ENCODE measurements at regions of chr10 and their contacts with region 1.

Region 1: GRCh38 chr10:6401562-6402348 is 178.3 kb downstream of the PRKCQ start:
- DNase-seq: peak; percentile 89
- H3K4me3 ChIP-seq: peak overlapping the region; percentile 40
- H3K4me3 Mint-ChIP-seq: peak overlapping the region; percentile 85
- H3K27ac Mint-ChIP-seq: peak overlapping the region; percentile 87
- H3K4me1 ChIP-seq: 0 out of 2 replicates have a peak, but pooled peaks cover 4% of the 10 kb centered on the region
- H3K4me1 Mint-ChIP-seq: peaks cover 9% of the 10 kb centered on the region
- H3K27me3 ChIP-seq: 0 out of 2 replicates have a peak, but pooled peaks cover 1% of the 10 kb centered on the region
- H3K27me3 Mint-ChIP-seq: peaks cover 17% of the 10 kb centered on the region
- CTCF ChIP-seq: peak; percentile 89 to 90

Region 2: DNA sequence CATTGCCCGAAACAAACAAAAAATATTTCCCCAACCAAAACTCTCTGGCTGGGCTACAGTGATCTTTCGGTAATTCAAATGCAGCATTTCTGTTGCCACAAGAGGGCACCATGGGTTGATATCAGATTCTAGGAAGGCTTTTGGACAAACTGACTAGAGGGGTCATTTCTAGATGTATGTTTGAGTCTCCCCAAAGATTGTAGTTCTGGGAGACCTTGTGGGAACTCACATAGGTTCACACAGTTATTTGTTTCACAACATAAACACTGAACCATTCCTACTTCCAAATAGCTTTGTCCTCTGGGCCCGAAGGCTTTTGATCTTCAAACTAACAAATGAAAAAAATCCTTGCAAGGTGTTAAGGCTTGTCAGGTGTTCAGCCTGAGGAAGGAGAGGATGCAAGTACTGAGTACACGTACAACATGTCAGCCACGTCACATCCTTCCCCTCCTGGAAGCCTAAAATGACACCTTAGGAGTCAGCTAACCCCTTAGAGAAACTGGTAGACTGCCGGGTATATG is 387.5 kb before region 1 on chr10:
- CTCF ChIA-PET with region 1: interaction called, 15 read pairs
- POLR2A ChIA-PET with region 1: no interaction called
- intact Hi-C with region 1: loop called (anchors 1 kb)
- DNase-seq: peak in 1 of 2 experiments; percentile 67
- H3K4me3 ChIP-seq: no peak overlapping the region
- H3K4me3 Mint-ChIP-seq: no peak overlapping the region
- H3K27ac Mint-ChIP-seq: no peak overlapping the region
- H3K4me1 ChIP-seq: no peaks in the 10 kb centered on the region
- H3K4me1 Mint-ChIP-seq: no peaks in the 10 kb centered on the region
- H3K27me3 ChIP-seq: no peaks in the 10 kb centered on the region; the same call in 1 of the 2 replicates
- H3K27me3 Mint-ChIP-seq: peaks cover 9% of the 10 kb centered on the region
- CTCF ChIP-seq: peak; percentile 82 to 85

Region 3: GRCh38 chr10:6108603-6109443 is 292.9 kb before region 1 on chr10:
- CTCF ChIA-PET with region 1: interaction called, 21 read pairs
- POLR2A ChIA-PET with region 1: no interaction called
- intact Hi-C with region 1: loop called (anchors 1 kb)
- DNase-seq: peak in 1 of 2 experiments; percentile 47
- H3K4me3 ChIP-seq: no peak overlapping the region
- H3K4me3 Mint-ChIP-seq: no peak overlapping the region
- H3K27ac Mint-ChIP-seq: no peak overlapping the region
- H3K4me1 ChIP-seq: no peaks in the 10 kb centered on the region
- H3K4me1 Mint-ChIP-seq: no peaks in the 10 kb centered on the region
- H3K27me3 ChIP-seq: no peaks in the 10 kb centered on the region
- H3K27me3 Mint-ChIP-seq: no peaks in the 10 kb centered on the region
- CTCF ChIP-seq: peak; percentile 61 to 85

Region 4: GRCh38 chr10:6144406-6145165 is 257.2 kb before region 1 on chr10:
- CTCF ChIA-PET with region 1: interaction called, 9 read pairs
- POLR2A ChIA-PET with region 1: interaction called, 3 read pairs
- intact Hi-C with region 1: loop called (anchors 1 kb)
- DNase-seq: peak; percentile 88 to 92
- H3K4me3 ChIP-seq: peak overlapping the region; percentile 94
- H3K4me3 Mint-ChIP-seq: peak overlapping the region; percentile 90
- H3K27ac Mint-ChIP-seq: peak overlapping the region; percentile 66
- H3K4me1 ChIP-seq: peaks cover 10% of the 10 kb centered on the region; the same call in 1 of the 2 replicates
- H3K4me1 Mint-ChIP-seq: peaks cover 6% of the 10 kb centered on the region
- H3K27me3 ChIP-seq: no peaks in the 10 kb centered on the region
- H3K27me3 Mint-ChIP-seq: peaks cover 1% of the 10 kb centered on the region
- CTCF ChIP-seq: no peak

Region 5: DNA sequence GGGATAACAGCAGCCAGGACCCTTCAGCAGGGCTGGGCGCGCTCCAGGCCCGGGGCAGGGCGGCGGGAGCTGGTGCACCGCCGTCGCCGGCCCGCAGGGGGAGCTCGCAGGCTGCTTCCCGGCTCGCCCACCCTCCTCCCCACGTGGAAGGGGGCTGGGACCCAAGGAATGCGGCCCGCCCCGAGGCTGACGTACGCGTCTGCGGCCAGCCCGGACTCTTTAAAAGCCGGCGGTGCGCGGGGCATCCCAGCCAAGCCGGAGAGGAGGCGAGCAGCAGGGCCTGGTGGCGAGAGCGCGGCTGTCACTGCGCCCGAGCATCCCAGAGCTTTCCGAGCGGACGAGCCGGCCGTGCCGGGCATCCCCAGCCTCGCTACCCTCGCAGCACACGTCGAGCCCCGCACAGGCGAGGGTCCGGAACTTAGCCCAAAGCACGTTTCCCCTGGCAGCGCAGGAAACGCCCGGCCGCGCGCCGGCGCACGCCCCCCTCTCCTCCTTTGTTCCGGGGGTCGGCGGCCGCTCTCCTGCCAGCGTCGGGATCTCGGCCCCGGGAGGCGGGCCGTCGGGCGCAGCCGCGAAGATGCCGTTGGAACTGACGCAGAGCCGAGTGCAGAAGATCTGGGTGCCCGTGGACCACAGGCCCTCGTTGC is 198.9 kb before region 1 on chr10 and contains the start of gene PFKFB3:
- CTCF ChIA-PET with region 1: interaction called, 327 read pairs
- POLR2A ChIA-PET with region 1: interaction called, 46 read pairs
- intact Hi-C with region 1: loop called (anchors 1 kb)
- DNase-seq: peak; percentile 96 to 99
- H3K4me3 ChIP-seq: peak within 1 kb of the TSS; percentile 78
- H3K4me3 Mint-ChIP-seq: peak within 1 kb of the TSS; percentile 92
- H3K27ac Mint-ChIP-seq: peak within 1 kb of the TSS; percentile 78
- H3K4me1 ChIP-seq: peaks cover 13% of the 10 kb centered on the region
- H3K4me1 Mint-ChIP-seq: peaks cover 8% of the 10 kb centered on the region
- H3K27me3 ChIP-seq: no peaks in the 10 kb centered on the region
- H3K27me3 Mint-ChIP-seq: no peaks in the 10 kb centered on the region
- CTCF ChIP-seq: peak; percentile 88 to 99
- total RNA-seq, gene PFKFB3: 33.0 and 35.4 TPM in 2 replicates

Region 6: DNA sequence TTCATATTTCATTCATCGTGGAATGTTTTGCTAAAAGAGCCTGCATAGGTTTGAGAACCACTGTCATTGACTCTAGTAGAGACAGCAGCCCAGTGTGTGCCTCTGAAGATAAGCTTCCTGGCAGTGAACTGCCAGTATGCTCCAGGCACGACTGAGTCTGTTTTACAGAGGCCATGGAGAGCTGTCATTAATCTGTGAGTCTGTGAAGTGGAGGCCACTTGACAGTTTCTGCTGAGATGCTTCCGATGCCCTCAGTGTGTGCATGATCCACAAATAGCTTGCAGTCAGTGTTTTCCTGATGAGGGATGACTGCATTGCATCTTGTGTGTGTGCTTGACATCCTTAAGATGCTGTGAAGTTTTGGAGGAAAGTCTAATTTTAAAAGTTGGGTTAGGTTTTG is 36.9 kb before region 1 on chr10:
- CTCF ChIA-PET with region 1: interaction called, 12 read pairs
- POLR2A ChIA-PET with region 1: interaction called, 7 read pairs
- intact Hi-C with region 1: no loop called
- DNase-seq: no peak
- H3K4me3 ChIP-seq: no peak overlapping the region
- H3K4me3 Mint-ChIP-seq: no peak overlapping the region
- H3K27ac Mint-ChIP-seq: peak overlapping the region; percentile 87
- H3K4me1 ChIP-seq: peaks cover 36% of the 10 kb centered on the region
- H3K4me1 Mint-ChIP-seq: peaks cover 29% of the 10 kb centered on the region
- H3K27me3 ChIP-seq: no peaks in the 10 kb centered on the region
- H3K27me3 Mint-ChIP-seq: no peaks in the 10 kb centered on the region
- CTCF ChIP-seq: no peak

Region 7: GRCh38 chr10:6416892-6417512 is 15.2 kb after region 1 on chr10:
- CTCF ChIA-PET with region 1: no interaction called
- POLR2A ChIA-PET with region 1: interaction called, 16 read pairs
- intact Hi-C with region 1: no loop called
- DNase-seq: peak in 1 of 2 experiments; percentile 68
- H3K4me3 ChIP-seq: no peak overlapping the region
- H3K4me3 Mint-ChIP-seq: no peak overlapping the region
- H3K27ac Mint-ChIP-seq: no peak overlapping the region
- H3K4me1 ChIP-seq: no peaks in the 10 kb centered on the region
- H3K4me1 Mint-ChIP-seq: no peaks in the 10 kb centered on the region
- H3K27me3 ChIP-seq: peaks cover 5% of the 10 kb centered on the region
- H3K27me3 Mint-ChIP-seq: peaks cover 14% of the 10 kb centered on the region
- CTCF ChIP-seq: peak in 1 of 2 experiments; percentile 81

Region 8: GRCh38 chr10:6478722-6479121 is 77.0 kb after region 1 on chr10:
- CTCF ChIA-PET with region 1: no interaction called
- POLR2A ChIA-PET with region 1: no interaction called
- intact Hi-C with region 1: no loop called
- DNase-seq: no peak
- H3K4me3 ChIP-seq: no peak overlapping the region
- H3K4me3 Mint-ChIP-seq: no peak overlapping the region
- H3K27ac Mint-ChIP-seq: no peak overlapping the region
- H3K4me1 ChIP-seq: no peaks in the 10 kb centered on the region
- H3K4me1 Mint-ChIP-seq: no peaks in the 10 kb centered on the region
- H3K27me3 ChIP-seq: no peaks in the 10 kb centered on the region
- H3K27me3 Mint-ChIP-seq: peaks cover 6% of the 10 kb centered on the region
- CTCF ChIP-seq: no peak

Region 9: GRCh38 chr10:6694447-6695140 is 292.8 kb after region 1 on chr10:
- CTCF ChIA-PET with region 1: no interaction called
- POLR2A ChIA-PET with region 1: no interaction called
- intact Hi-C with region 1: no loop called
- DNase-seq: no peak
- H3K4me3 ChIP-seq: no peak overlapping the region
- H3K4me3 Mint-ChIP-seq: no peak overlapping the region
- H3K27ac Mint-ChIP-seq: no peak overlapping the region
- H3K4me1 ChIP-seq: no peaks in the 10 kb centered on the region
- H3K4me1 Mint-ChIP-seq: no peaks in the 10 kb centered on the region
- H3K27me3 ChIP-seq: no peaks in the 10 kb centered on the region
- H3K27me3 Mint-ChIP-seq: peaks cover 26% of the 10 kb centered on the region
- CTCF ChIP-seq: no peak